ENCODE measurements at regions of chr3 and their contacts with region 1.

Region 1: GRCh38 chr3:52786330-52787215 is 8.0 kb upstream of the ITIH3 start:
- DNase-seq: no peak
- H3K27ac ChIP-seq: no peak overlapping the region
- CTCF ChIP-seq: no peak

Region 2: DNA sequence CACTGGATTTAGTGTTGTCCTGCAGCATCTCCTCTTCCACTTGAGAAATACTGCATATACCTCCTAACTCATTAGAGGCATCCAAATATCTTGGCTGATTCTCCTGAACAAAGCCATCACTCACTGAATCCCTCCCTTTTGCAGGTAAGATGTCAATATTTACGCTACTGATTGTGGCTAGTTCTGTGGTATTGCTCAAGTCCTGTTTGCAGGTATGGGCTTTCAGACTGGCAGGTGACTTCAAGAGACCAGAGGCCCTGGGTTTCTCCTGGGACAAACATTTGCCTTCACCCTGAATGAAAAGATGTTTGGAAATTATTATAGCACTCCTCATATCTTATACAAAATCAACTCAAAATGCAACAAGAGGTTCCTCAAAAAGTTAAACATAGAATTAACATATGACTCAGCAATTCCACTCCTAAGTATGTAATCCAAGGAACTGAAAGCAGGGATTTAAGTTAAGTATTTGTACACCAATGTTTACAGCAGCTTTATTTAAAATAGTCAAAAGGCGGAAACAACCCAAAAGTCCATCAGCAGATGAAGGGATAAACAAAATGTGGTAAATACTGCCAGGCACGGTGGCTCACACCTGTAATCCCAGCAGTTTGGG is 34.4 kb before region 1 on chr3:
- CTCF ChIA-PET with region 1: no interaction called
- POLR2A ChIA-PET with region 1: interaction called, 12 read pairs
- DNase-seq: no peak
- H3K27ac ChIP-seq: no peak overlapping the region
- CTCF ChIP-seq: no peak

Region 3: GRCh38 chr3:53464424-53464823 is 677.9 kb after region 1 on chr3:
- CTCF ChIA-PET with region 1: no interaction called
- POLR2A ChIA-PET with region 1: no interaction called
- DNase-seq: peak; percentile 35
- H3K27ac ChIP-seq: no peak overlapping the region
- CTCF ChIP-seq: no peak

Measured in RWPE1 (cell line).